MCF 10A (cell line): ENCODE measurements at regions of chr10 and their contacts with region 1.

Region 1: GRCh38 chr10:131900350-131901146 is at the start of gene PPP2R2D:
- DNase-seq: peak; percentile 93
- H3K4me3 Mint-ChIP-seq: peak within 1 kb of the TSS; percentile 84
- H3K27ac Mint-ChIP-seq: peak within 1 kb of the TSS; percentile 85
- H3K4me1 Mint-ChIP-seq: peaks cover 22% of the 10 kb centered on the region
- H3K27me3 Mint-ChIP-seq: peaks cover 18% of the 10 kb centered on the region
- CTCF ChIP-seq: no peak
- total RNA-seq, gene PPP2R2D: 34.9 and 35.5 TPM in 2 replicates

Region 2: GRCh38 chr10:131825150-131825848 is 75.2 kb before region 1 on chr10:
- CTCF ChIA-PET with region 1: no interaction called
- POLR2A ChIA-PET with region 1: no interaction called
- intact Hi-C with region 1: no loop called
- DNase-seq: no peak
- H3K4me3 Mint-ChIP-seq: no peak overlapping the region
- H3K27ac Mint-ChIP-seq: no peak overlapping the region
- H3K4me1 Mint-ChIP-seq: no peaks in the 10 kb centered on the region
- H3K27me3 Mint-ChIP-seq: no peaks in the 10 kb centered on the region
- CTCF ChIP-seq: no peak

Region 3: GRCh38 chr10:131841131-131841660 is 59.4 kb before region 1 on chr10:
- CTCF ChIA-PET with region 1: no interaction called
- POLR2A ChIA-PET with region 1: no interaction called
- intact Hi-C with region 1: no loop called
- DNase-seq: no peak
- H3K4me3 Mint-ChIP-seq: no peak overlapping the region
- H3K27ac Mint-ChIP-seq: no peak overlapping the region
- H3K4me1 Mint-ChIP-seq: no peaks in the 10 kb centered on the region
- H3K27me3 Mint-ChIP-seq: no peaks in the 10 kb centered on the region
- CTCF ChIP-seq: no peak

Region 4: GRCh38 chr10:131943021-131943814 is 42.7 kb after region 1 on chr10:
- CTCF ChIA-PET with region 1: interaction called, 4 read pairs
- POLR2A ChIA-PET with region 1: interaction called, 4 read pairs
- intact Hi-C with region 1: loop called (anchors 5 kb)
- DNase-seq: peak; percentile 22
- H3K4me3 Mint-ChIP-seq: no peak overlapping the region
- H3K27ac Mint-ChIP-seq: no peak overlapping the region
- H3K4me1 Mint-ChIP-seq: peaks cover 23% of the 10 kb centered on the region
- H3K27me3 Mint-ChIP-seq: no peaks in the 10 kb centered on the region
- CTCF ChIP-seq: no peak

Region 5: DNA sequence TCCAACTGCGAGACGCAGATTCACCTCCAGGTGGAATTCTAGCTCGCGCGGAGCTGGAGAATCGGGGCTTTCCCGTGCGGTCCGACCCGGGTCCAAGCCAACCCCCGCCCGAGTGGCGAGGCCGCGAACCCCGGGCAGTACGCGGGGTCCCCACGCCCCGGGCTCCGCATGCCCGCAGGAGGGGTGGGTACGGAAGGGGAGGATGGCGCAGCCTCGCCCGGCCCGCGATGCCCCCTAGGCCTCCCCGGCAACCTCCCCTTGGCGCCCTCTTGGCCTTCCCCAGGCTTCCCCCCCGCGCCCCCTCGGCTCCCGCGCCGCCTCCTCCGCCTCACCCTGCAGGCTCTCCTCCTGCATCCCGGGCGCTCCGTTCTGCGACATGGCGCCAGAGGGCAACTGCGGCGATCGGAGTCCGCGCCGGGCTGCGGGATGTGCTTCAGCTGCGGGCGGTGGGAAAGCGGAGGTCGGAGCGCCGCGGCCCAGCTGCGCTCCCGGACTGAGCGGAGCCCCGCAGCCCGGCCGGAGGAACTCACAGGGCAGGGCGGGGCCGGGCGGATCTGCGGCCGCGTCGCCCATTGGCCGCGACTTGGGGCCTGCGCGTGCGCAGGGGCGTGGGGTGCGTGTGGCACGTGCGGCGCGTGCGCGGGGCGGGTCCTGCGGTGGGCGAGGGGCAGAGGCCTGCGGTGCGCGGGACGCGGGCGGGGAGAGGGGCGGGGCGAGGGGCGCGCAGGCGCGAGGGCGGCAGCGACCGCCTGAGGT is 81.1 kb after region 1 on chr10 and contains the start of gene BNIP3:
- CTCF ChIA-PET with region 1: no interaction called
- POLR2A ChIA-PET with region 1: interaction called, 8 read pairs
- intact Hi-C with region 1: loop called (anchors 5 kb)
- DNase-seq: peak; percentile 91
- H3K4me3 Mint-ChIP-seq: peak within 1 kb of the TSS; percentile 82
- H3K27ac Mint-ChIP-seq: peak within 1 kb of the TSS; percentile 75
- H3K4me1 Mint-ChIP-seq: peaks cover 18% of the 10 kb centered on the region
- H3K27me3 Mint-ChIP-seq: no peaks in the 10 kb centered on the region
- CTCF ChIP-seq: no peak
- total RNA-seq, gene BNIP3: 47.0 and 53.0 TPM in 2 replicates

Region 6: GRCh38 chr10:132862485-132863420 is 962.2 kb after region 1 on chr10:
- CTCF ChIA-PET with region 1: no interaction called
- POLR2A ChIA-PET with region 1: no interaction called
- intact Hi-C with region 1: no loop called
- DNase-seq: no peak
- H3K4me3 Mint-ChIP-seq: no peak overlapping the region
- H3K27ac Mint-ChIP-seq: no peak overlapping the region
- H3K4me1 Mint-ChIP-seq: peaks cover 6% of the 10 kb centered on the region
- H3K27me3 Mint-ChIP-seq: peaks cover 22% of the 10 kb centered on the region
- CTCF ChIP-seq: no peak